GM12878 (cell line): ENCODE measurements at regions of chr5 and their contacts with region 1.

Region 1: DNA sequence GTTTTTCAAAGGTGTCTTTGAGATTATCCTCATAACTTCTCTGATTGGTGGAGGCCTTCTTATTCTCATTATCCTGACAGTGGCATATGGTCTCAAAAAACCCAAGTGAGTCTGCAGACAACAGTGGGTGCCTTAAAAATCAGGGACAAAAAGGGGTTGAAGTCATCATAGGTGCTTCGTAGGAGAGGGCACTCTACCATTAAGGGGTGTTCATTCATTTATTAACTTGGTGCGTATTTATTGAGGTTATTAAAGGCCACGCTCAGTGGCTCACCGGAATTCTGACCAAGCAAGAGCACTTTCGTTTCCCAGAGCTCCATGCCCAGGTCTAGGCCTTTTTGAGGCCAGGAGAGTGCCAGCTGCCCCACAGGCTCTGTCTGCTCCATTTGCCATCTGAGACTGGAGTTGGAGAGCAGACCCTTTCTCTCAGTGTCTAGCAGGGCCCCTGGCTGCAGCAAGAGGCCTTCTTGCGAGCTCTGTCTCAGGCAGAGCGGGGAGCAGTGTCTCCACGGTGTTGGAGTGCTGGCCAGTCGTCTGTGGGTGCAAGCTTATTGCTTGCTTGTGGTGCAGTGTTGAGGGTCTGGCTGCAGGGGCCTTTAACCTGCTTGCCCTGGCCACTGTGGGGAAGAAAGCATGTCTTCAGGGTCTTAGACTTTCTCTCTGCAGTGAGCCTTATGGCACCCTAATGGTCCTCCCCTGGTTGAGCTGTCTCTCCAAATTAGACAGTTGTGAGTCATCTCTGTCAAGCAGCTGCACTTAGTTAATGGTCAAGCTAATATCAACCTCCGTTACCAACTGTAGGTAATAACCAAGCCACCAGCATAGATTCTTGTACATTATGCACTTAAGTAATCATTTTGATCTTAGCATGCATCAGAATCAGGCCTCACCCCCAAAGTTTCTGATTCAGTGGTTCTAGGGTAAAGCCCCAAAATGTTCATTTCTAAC is 62.6 kb downstream of the IL31RA start:
- DNase-seq: no peak
- ATAC-seq: peak; percentile 95
- H3K4me3 ChIP-seq: no peak overlapping the region
- H3K27ac ChIP-seq: no peak overlapping the region
- H3K4me1 ChIP-seq: no peaks in the 10 kb centered on the region
- H3K27me3 ChIP-seq: 0 out of 4 replicates have a peak, but pooled peaks cover 0 to 2% of the 10 kb centered on the region in 2 experiments
- CTCF ChIP-seq: no peak
- EP300 ChIP-seq: peak in 1 of 2 experiments; percentile 63; a peak in 3 of 4 replicates
- POLR2A ChIP-seq: no peak
- RAD21 ChIP-seq: no peak

Region 2: GRCh38 chr5:55711968-55712859 is 201.5 kb before region 1 on chr5 and contains the start of gene SLC38A9:
- CTCF ChIA-PET with region 1: no interaction called
- POLR2A ChIA-PET with region 1: no interaction called
- RAD21 ChIA-PET with region 1: no interaction called
- SMC1A ChIA-PET with region 1: interaction called, 4 read pairs
- in situ Hi-C with region 1: no loop called
- intact Hi-C with region 1: loop called (anchors 5 kb)
- DNase-seq: peak; percentile 68
- ATAC-seq: peak; percentile 99
- H3K4me3 ChIP-seq: peak within 1 kb of the TSS; percentile 83
- H3K27ac ChIP-seq: peak within 1 kb of the TSS; percentile 51
- H3K4me1 ChIP-seq: peaks cover 4% of the 10 kb centered on the region; the same call in 1 of the 2 replicates
- H3K27me3 ChIP-seq: no peaks in the 10 kb centered on the region
- CTCF ChIP-seq: no peak
- EP300 ChIP-seq: no peak
- POLR2A ChIP-seq: peak; percentile 80
- RAD21 ChIP-seq: no peak
- polyA plus RNA-seq, gene SLC38A9: 8.5 to 17.4 TPM

Region 3: DNA sequence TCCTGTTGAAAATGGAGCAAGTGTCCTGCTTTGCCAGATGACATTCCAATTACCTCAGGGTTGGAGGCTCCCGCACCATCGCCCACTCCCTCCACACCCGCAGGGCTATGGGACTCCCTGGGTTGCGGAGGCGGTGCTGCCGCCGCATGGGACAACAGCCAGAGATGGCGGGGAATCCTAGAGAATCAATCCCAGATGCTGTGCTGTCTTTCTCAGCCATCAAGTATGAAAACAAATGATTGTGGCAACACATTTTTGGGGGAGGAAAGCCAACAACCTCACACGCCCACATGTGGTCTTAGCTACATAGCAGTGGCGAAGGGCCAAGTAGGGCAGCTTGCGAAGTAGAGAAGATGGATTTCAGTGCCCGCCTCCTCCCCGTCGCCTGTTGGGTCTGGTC is 15.8 kb before region 1 on chr5:
- CTCF ChIA-PET with region 1: interaction called, 7 read pairs
- POLR2A ChIA-PET with region 1: interaction called, 5 read pairs
- RAD21 ChIA-PET with region 1: interaction called, 24 read pairs
- SMC1A ChIA-PET with region 1: interaction called, 41 read pairs
- in situ Hi-C with region 1: no loop called
- intact Hi-C with region 1: no loop called
- DNase-seq: no peak
- ATAC-seq: peak; percentile 22; the same call in 2 of the 3 replicates
- H3K4me3 ChIP-seq: no peak overlapping the region
- H3K27ac ChIP-seq: no peak overlapping the region
- H3K4me1 ChIP-seq: peaks cover 11% of the 10 kb centered on the region
- H3K27me3 ChIP-seq: no peaks in the 10 kb centered on the region
- CTCF ChIP-seq: no peak
- EP300 ChIP-seq: no peak
- POLR2A ChIP-seq: no peak
- RAD21 ChIP-seq: no peak

Region 4: GRCh38 chr5:56011835-56012234 is 98.1 kb after region 1 on chr5:
- CTCF ChIA-PET with region 1: no interaction called
- POLR2A ChIA-PET with region 1: no interaction called
- RAD21 ChIA-PET with region 1: no interaction called
- SMC1A ChIA-PET with region 1: no interaction called
- in situ Hi-C with region 1: no loop called
- intact Hi-C with region 1: no loop called
- DNase-seq: no peak
- ATAC-seq: no peak; the same call in 1 of the 3 replicates
- H3K4me3 ChIP-seq: no peak overlapping the region
- H3K27ac ChIP-seq: no peak overlapping the region
- H3K4me1 ChIP-seq: peaks cover 4% of the 10 kb centered on the region; the same call in 1 of the 2 replicates
- H3K27me3 ChIP-seq: no peaks in the 10 kb centered on the region
- CTCF ChIP-seq: no peak
- EP300 ChIP-seq: no peak
- POLR2A ChIP-seq: no peak
- RAD21 ChIP-seq: no peak